Vagina (tissue), 2 donors: ENCODE measurements at regions of chr5 and their contacts with region 1.

Region 1: GRCh38 chr5:122954719-122955118 is 81.8 kb downstream of the PPIC start:
- DNase-seq: no peak
- H3K4me3 ChIP-seq: no peak overlapping the region
- H3K27ac ChIP-seq: no peak overlapping the region
- H3K4me1 ChIP-seq: no peaks in the 10 kb centered on the region
- H3K27me3 ChIP-seq: no peaks in the 10 kb centered on the region
- CTCF ChIP-seq: no peak
- POLR2A ChIP-seq: no peak

Region 2: DNA sequence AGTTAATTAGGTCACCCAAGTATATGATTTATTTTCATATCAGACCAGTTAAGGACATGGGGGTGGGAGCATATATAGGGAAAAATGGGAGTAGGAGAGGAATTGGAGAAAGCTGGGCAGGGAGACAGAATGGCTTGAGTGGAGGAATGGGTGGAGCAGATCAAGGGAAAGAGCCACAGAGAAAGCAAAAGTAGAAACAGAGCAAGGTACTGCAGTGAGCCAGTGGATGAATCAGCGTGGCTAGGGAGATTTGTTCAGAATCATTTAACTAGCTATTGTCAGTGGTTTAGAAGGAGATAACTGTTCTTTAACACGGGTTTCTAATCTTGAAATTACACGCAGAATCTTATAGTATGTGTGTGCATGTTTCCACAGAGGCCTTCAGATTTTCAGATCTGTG is 71.9 kb before region 1 on chr5:
- intact Hi-C with region 1: loop called (anchors 1 kb)
- DNase-seq: no peak
- H3K4me3 ChIP-seq: no peak overlapping the region
- H3K27ac ChIP-seq: no peak overlapping the region
- H3K4me1 ChIP-seq: no peaks in the 10 kb centered on the region
- H3K27me3 ChIP-seq: no peaks in the 10 kb centered on the region
- CTCF ChIP-seq: no peak
- POLR2A ChIP-seq: no peak

Region 3: GRCh38 chr5:122907238-122907637 is 47.5 kb before region 1 on chr5:
- intact Hi-C with region 1: no loop called
- DNase-seq: no peak
- H3K4me3 ChIP-seq: no peak overlapping the region
- H3K27ac ChIP-seq: no peak overlapping the region
- H3K4me1 ChIP-seq: peaks cover 5% of the 10 kb centered on the region
- H3K27me3 ChIP-seq: no peaks in the 10 kb centered on the region
- CTCF ChIP-seq: no peak
- POLR2A ChIP-seq: no peak